Calu3 (cell line): ENCODE measurements at regions of chr16 and their contacts with region 1.

Region 1: GRCh38 chr16:20741554-20742285 is at the start of gene THUMPD1:
- DNase-seq: peak; percentile 98
- H3K4me3 Mint-ChIP-seq: peak within 1 kb of the TSS; percentile 81
- H3K27ac Mint-ChIP-seq: peak within 1 kb of the TSS; percentile 66
- H3K4me1 Mint-ChIP-seq: no peaks in the 10 kb centered on the region
- H3K27me3 Mint-ChIP-seq: no peaks in the 10 kb centered on the region
- CTCF ChIP-seq: no peak
- total RNA-seq, gene THUMPD1: 45.4 and 46.1 TPM in 2 replicates

Region 2: DNA sequence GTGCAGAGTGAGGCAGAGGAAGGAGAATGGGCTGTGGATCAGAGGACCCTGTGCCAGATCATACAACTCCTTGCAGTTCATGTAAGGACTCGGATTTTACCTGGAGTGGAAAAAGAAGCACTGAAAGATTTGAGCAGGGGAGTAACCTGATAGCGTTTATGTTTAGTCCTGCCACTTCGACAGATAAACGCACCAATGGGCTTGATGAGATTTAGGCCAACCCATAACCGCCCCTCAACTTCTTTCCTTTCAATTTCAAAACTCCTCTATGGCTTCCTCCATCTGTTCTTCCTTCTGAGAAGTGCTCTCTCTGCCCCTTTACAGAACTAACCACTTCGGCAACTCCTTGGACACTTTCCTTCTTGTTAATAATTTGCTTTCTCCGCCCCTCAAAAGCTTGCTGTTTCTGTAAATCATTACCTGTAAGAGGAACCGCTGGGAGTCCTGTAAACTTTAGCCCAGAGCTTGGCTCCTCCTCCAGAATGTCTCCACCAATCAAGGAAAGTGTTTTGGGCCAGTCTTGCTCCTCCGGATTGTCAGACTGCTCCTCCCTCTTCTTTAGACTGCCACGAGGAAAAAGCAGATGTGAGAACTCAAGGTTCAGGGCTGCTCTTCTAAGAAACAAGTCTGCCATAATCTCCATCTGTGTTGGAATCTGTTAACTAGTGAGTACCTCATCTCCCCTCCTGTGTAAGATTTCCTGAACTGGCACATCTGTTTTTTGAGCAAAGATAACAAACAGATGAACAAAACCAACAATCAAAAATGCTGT is 21.9 kb after region 1 on chr16 and contains the start of gene ACSM3:
- CTCF ChIA-PET with region 1: interaction called, 15 read pairs
- intact Hi-C with region 1: no loop called
- DNase-seq: peak; percentile 89
- H3K4me3 Mint-ChIP-seq: peak within 1 kb of the TSS; percentile 66
- H3K27ac Mint-ChIP-seq: peak within 1 kb of the TSS; percentile 82
- H3K4me1 Mint-ChIP-seq: peaks cover 31% of the 10 kb centered on the region
- H3K27me3 Mint-ChIP-seq: no peaks in the 10 kb centered on the region
- CTCF ChIP-seq: no peak
- total RNA-seq, gene ACSM3: 49.5 and 65.0 TPM in 2 replicates

Region 3: GRCh38 chr16:20814784-20815183 is 73.1 kb after region 1 on chr16:
- CTCF ChIA-PET with region 1: no interaction called
- intact Hi-C with region 1: no loop called
- DNase-seq: no peak
- H3K4me3 Mint-ChIP-seq: no peak overlapping the region
- H3K27ac Mint-ChIP-seq: no peak overlapping the region
- H3K4me1 Mint-ChIP-seq: no peaks in the 10 kb centered on the region
- H3K27me3 Mint-ChIP-seq: no peaks in the 10 kb centered on the region
- CTCF ChIP-seq: no peak

Region 4: DNA sequence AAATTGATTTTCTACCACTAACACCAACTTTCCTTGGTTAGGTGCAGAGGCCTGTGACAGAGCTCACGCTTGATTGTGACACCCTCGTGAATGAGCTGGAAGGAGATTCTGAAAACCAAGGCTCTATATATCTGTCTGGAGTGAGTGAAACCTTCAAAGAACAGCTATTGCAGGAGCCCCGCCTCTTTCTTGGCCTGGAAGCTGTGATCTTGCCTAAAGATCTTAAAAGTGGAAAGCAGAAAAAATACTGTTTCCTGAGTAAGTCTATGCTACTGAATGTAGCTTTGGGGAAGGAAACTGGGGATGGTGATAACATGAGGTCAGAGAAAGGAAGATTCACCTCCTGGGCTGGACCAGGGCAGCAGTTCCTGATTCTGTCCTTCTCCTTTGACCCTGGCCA is 102.9 kb after region 1 on chr16:
- CTCF ChIA-PET with region 1: no interaction called
- intact Hi-C with region 1: no loop called
- DNase-seq: no peak
- H3K4me3 Mint-ChIP-seq: no peak overlapping the region
- H3K27ac Mint-ChIP-seq: no peak overlapping the region
- H3K4me1 Mint-ChIP-seq: peaks cover 1% of the 10 kb centered on the region
- H3K27me3 Mint-ChIP-seq: no peaks in the 10 kb centered on the region
- CTCF ChIP-seq: no peak

Region 5: DNA sequence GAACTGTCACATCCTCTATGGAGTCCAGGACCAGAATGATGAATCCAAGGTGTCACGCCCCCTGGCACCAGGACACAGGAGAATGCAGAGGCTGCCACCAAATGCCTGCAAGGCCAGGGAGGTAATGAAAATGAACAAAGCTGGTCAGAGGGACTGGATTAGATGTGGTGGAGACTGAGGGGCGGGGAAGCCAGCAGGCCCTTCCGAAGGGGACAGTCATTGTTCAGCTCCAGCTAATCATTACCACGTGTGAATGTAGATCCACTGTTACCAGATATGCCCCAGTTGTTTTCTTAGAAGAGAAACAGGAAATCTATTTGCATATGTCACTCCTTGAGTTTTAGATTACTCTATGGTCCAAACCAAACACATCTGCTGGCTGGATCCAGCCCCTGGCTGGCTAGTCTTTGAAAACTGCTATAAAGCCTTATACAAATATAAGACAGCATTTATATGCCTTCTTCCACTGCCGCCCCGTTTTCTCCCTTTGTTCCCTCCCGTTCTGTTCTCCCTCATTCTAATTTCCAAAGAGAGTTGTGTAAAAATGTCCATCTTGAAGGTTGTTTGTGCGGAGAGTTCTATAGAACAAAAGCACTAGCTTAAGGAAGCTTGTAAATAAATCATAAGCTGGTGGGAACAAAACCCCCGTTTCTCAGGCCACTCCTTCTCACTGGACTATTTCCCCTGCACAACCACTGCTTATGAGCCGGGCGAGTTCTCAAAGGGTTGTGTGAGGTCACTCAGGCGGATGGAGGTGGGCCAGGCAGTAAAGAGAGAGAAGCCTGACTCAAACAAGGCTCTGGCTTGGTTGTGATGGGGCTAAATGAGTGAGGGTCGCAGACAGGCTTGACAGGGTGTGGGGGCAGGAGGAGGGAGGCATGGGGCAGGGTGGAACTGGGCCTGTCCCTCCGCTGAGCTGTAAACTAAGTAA is 522.2 kb after region 1 on chr16:
- CTCF ChIA-PET with region 1: no interaction called
- intact Hi-C with region 1: no loop called
- DNase-seq: peak; percentile 40
- H3K4me3 Mint-ChIP-seq: no peak overlapping the region
- H3K27ac Mint-ChIP-seq: peak overlapping the region; percentile 8
- H3K4me1 Mint-ChIP-seq: peaks cover 72% of the 10 kb centered on the region
- H3K27me3 Mint-ChIP-seq: no peaks in the 10 kb centered on the region
- CTCF ChIP-seq: no peak